Activated naive CD4-positive, alpha-beta T cell treated with anti-CD3 and anti-CD28 coated beads for 36 hours (primary cell): ENCODE measurements at regions of chr6 and their contacts with region 1.

Region 1: GRCh38 chr6:24883618-24884017 is 52.1 kb downstream of the RIPOR2 start:
- DNase-seq: peak; percentile 82
- H3K4me3 Mint-ChIP-seq: peak overlapping the region; percentile 73
- H3K27ac Mint-ChIP-seq: peak overlapping the region; percentile 99
- H3K4me1 Mint-ChIP-seq: peaks cover 91% of the 10 kb centered on the region
- H3K27me3 Mint-ChIP-seq: no peaks in the 10 kb centered on the region

Region 2: GRCh38 chr6:24902782-24903181 is 19.2 kb after region 1 on chr6:
- CTCF ChIA-PET with region 1: interaction called, 19 read pairs
- intact Hi-C with region 1: loop called (anchors 1 kb)
- DNase-seq: no peak
- H3K4me3 Mint-ChIP-seq: no peak overlapping the region
- H3K27ac Mint-ChIP-seq: peak overlapping the region; percentile 84
- H3K4me1 Mint-ChIP-seq: peaks cover 90% of the 10 kb centered on the region
- H3K27me3 Mint-ChIP-seq: no peaks in the 10 kb centered on the region

Region 3: DNA sequence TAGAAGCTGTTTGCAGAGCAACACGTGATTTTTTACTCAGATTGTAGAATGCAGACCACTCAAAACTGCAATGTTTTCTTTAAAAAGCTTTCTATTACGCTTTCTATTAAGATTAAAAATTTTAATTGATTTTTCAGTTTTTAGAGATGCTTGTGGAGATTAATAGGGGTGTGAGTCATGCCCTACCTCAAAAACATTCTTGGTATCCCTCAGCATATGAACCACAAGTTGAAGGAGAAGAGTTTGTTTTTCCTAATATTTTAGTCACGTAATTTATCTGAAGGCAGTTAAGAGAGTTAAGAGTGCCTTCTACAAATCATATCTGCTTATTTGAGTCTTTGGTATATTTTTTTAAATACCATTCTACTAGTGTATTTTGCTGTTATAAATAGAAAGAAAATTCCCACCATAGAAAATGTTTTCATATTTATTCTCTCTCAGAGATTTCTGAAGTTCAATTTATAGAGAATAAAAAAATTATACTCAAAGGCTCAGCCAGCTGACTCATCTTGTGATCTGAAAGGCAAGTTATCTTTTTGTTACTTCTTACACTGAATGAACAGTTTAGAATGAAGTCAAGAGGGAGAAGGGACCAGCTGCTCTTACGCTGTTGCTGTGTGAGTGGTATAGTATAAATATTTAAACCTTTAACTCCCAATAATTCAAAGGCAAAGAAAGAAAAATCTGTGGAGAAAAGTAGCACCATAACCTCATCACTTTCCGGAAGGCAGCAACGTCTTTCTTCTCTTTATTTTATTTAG is 44.5 kb after region 1 on chr6:
- CTCF ChIA-PET with region 1: interaction called, 29 read pairs
- intact Hi-C with region 1: loop called (anchors 1 kb)
- DNase-seq: no peak
- H3K4me3 Mint-ChIP-seq: peak overlapping the region; percentile 90
- H3K27ac Mint-ChIP-seq: peak overlapping the region; percentile 96
- H3K4me1 Mint-ChIP-seq: peaks cover 77% of the 10 kb centered on the region
- H3K27me3 Mint-ChIP-seq: no peaks in the 10 kb centered on the region

Region 4: GRCh38 chr6:24968786-24969185 is 85.2 kb after region 1 on chr6:
- CTCF ChIA-PET with region 1: no interaction called
- intact Hi-C with region 1: no loop called
- DNase-seq: no peak
- H3K4me3 Mint-ChIP-seq: no peak overlapping the region
- H3K27ac Mint-ChIP-seq: no peak overlapping the region
- H3K4me1 Mint-ChIP-seq: peaks cover 59% of the 10 kb centered on the region
- H3K27me3 Mint-ChIP-seq: no peaks in the 10 kb centered on the region

Region 5: GRCh38 chr6:25006565-25007001 is 123.0 kb after region 1 on chr6:
- CTCF ChIA-PET with region 1: interaction called, 3 read pairs
- intact Hi-C with region 1: loop called (anchors 1 kb)
- DNase-seq: peak; percentile 72
- H3K4me3 Mint-ChIP-seq: peak overlapping the region; percentile 31
- H3K27ac Mint-ChIP-seq: peak overlapping the region; percentile 68
- H3K4me1 Mint-ChIP-seq: peaks cover 80% of the 10 kb centered on the region
- H3K27me3 Mint-ChIP-seq: no peaks in the 10 kb centered on the region